CD4-positive, alpha-beta memory T cell (primary cell): ENCODE measurements at regions of chr17 and their contacts with region 1.

Region 1: GRCh38 chr17:3738562-3739295 is 15.0 kb downstream of the HASPIN start:
- DNase-seq: peak; percentile 45 to 71 (median 52)
- H3K4me3 ChIP-seq: no peak overlapping the region
- H3K4me3 Mint-ChIP-seq: peak overlapping the region; percentile 21 to 70 (median 58)
- H3K27ac ChIP-seq: no peak overlapping the region
- H3K27ac Mint-ChIP-seq: peak overlapping the region; percentile 67 to 88 (median 81)
- H3K4me1 ChIP-seq: peaks cover 39% of the 10 kb centered on the region
- H3K4me1 Mint-ChIP-seq: peaks cover 21 to 39% (median 30%) of the 10 kb centered on the region in 4 donors
- H3K27me3 ChIP-seq: no peaks in the 10 kb centered on the region
- H3K27me3 Mint-ChIP-seq: no peaks in the 10 kb centered on the region

Region 2: DNA sequence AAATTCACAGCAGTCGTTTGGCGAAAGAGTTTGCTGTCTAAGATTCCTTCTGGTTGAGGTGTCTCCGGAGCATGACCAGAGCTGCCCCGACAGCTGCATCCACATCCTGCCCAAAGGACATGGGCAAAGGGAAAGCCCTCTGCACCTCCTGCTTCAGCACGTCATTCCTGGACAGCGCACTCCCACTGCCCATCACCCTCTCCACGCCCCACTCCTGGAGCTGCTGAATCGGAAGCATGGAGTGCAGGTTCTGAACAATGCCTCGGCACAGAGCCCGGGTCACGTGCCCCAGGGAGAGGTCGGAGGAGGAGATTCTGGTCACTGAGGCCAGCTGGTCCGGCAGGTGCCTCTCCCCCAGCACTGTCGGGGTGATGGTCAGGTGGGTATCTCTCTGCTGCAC is 128.2 kb before region 1 on chr17:
- CTCF ChIA-PET with region 1: no interaction called
- POLR2A ChIA-PET with region 1: no interaction called
- intact Hi-C with region 1: no loop called
- DNase-seq: no peak
- H3K4me3 ChIP-seq: no peak overlapping the region
- H3K4me3 Mint-ChIP-seq: no peak overlapping the region
- H3K27ac ChIP-seq: no peak overlapping the region
- H3K27ac Mint-ChIP-seq: no peak overlapping the region
- H3K4me1 ChIP-seq: no peaks in the 10 kb centered on the region
- H3K4me1 Mint-ChIP-seq: no peaks in the 10 kb centered on the region
- H3K27me3 ChIP-seq: no peaks in the 10 kb centered on the region
- H3K27me3 Mint-ChIP-seq: no peaks in the 10 kb centered on the region

Region 3: DNA sequence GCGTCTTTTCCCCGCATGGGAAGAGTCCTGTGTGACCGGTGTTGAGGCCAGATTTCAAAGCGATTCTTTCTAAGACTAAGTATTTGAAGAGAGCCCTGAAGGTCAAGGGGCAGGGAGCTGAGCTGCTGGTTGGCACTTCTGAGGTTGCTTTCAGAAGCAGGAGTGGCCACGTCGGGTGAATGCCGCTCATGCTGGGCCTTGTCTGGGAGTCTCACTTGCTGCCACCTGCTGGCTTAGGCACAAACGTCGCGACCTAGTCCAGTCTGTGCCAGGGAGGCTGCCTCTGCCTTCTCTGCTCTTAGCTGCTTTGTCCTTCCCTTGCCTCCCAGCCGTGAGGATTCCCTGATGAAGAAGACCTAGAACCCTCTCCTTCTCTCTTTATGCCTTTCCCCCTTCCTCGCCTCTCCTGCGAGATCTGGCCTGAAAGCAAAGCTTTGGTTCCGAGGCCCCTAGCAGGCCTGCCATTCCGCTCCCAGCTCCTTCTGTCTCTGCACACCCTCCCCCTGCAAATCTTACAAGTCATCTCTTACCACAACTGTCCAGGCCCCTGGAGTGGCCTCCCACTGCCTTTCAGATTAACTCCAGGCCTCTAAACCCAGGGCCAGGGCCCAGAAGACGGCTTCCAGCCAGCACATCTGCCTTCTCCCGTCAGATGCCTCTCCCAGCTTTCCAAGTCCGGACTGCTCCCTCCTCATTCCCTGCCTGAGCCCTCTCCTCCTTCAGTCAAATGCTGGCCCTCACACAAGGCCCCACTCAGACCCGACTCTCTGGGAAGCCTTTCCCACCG is 90.8 kb before region 1 on chr17:
- CTCF ChIA-PET with region 1: no interaction called
- POLR2A ChIA-PET with region 1: no interaction called
- intact Hi-C with region 1: no loop called
- DNase-seq: peak in 3 of 5 donors; percentile 20 to 26 (median 21)
- H3K4me3 ChIP-seq: no peak overlapping the region
- H3K4me3 Mint-ChIP-seq: no peak overlapping the region
- H3K27ac ChIP-seq: no peak overlapping the region
- H3K27ac Mint-ChIP-seq: no peak overlapping the region
- H3K4me1 ChIP-seq: no peaks in the 10 kb centered on the region
- H3K4me1 Mint-ChIP-seq: peaks cover 0 to 3% (median 0%) of the 10 kb centered on the region in 4 donors
- H3K27me3 ChIP-seq: no peaks in the 10 kb centered on the region
- H3K27me3 Mint-ChIP-seq: no peaks in the 10 kb centered on the region

Region 4: GRCh38 chr17:3695723-3696411 is 42.9 kb before region 1 on chr17 and contains the start of gene P2RX5:
- CTCF ChIA-PET with region 1: interaction called, 11 read pairs
- POLR2A ChIA-PET with region 1: interaction called, 6 read pairs
- intact Hi-C with region 1: no loop called
- DNase-seq: peak; percentile 32 to 44 (median 37)
- H3K4me3 ChIP-seq: peak within 1 kb of the TSS; percentile 42 to 74
- H3K4me3 Mint-ChIP-seq: peak within 1 kb of the TSS; percentile 94 to 98 (median 96)
- H3K27ac ChIP-seq: peak within 1 kb of the TSS; percentile 48
- H3K27ac Mint-ChIP-seq: peak within 1 kb of the TSS; percentile 35 to 95 (median 87)
- H3K4me1 ChIP-seq: peaks cover 20% of the 10 kb centered on the region
- H3K4me1 Mint-ChIP-seq: peaks cover 8 to 36% (median 20%) of the 10 kb centered on the region in 4 donors
- H3K27me3 ChIP-seq: no peaks in the 10 kb centered on the region
- H3K27me3 Mint-ChIP-seq: no peaks in the 10 kb centered on the region
- total RNA-seq, gene P2RX5: 13.8 to 16.0 TPM

Region 5: GRCh38 chr17:3762922-3763776 is 24.4 kb after region 1 on chr17:
- CTCF ChIA-PET with region 1: interaction called, 28 read pairs
- POLR2A ChIA-PET with region 1: interaction called, 4 read pairs
- intact Hi-C with region 1: no loop called
- DNase-seq: peak in 2 of 5 donors; percentile 35 to 61
- H3K4me3 ChIP-seq: no peak overlapping the region
- H3K4me3 Mint-ChIP-seq: peak overlapping the region; percentile 57 to 94 (median 78)
- H3K27ac ChIP-seq: peak overlapping the region; percentile 30
- H3K27ac Mint-ChIP-seq: peak overlapping the region; percentile 77 to 97 (median 89)
- H3K4me1 ChIP-seq: peaks cover 50% of the 10 kb centered on the region
- H3K4me1 Mint-ChIP-seq: peaks cover 24 to 61% (median 39%) of the 10 kb centered on the region in 4 donors
- H3K27me3 ChIP-seq: no peaks in the 10 kb centered on the region
- H3K27me3 Mint-ChIP-seq: peaks cover 0 to 1% of the 10 kb centered on the region in 2 donors

Region 6: DNA sequence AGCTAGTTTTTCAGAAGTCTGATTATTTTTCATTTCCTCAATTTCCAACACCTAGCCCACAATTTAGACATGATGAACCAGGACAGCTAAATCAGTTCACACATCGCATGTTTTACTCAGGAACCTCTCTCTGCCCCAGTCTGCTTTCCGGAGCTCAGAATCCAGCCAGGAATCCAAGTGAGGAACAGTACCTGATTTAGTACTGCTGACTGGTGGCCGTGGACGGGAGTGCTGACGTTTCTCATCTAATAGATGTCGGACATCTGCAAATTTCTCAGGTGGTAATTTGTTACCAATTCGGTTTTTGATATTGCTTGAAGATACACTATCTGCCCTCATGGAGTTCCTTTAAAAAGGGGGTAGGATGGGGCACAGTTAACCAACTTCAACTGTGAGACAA is 77.2 kb after region 1 on chr17:
- CTCF ChIA-PET with region 1: interaction called, 333 read pairs
- POLR2A ChIA-PET with region 1: no interaction called
- intact Hi-C with region 1: no loop called
- DNase-seq: no peak
- H3K4me3 ChIP-seq: no peak overlapping the region
- H3K4me3 Mint-ChIP-seq: no peak overlapping the region
- H3K27ac ChIP-seq: no peak overlapping the region
- H3K27ac Mint-ChIP-seq: no peak overlapping the region
- H3K4me1 ChIP-seq: no peaks in the 10 kb centered on the region
- H3K4me1 Mint-ChIP-seq: no peaks in the 10 kb centered on the region
- H3K27me3 ChIP-seq: no peaks in the 10 kb centered on the region
- H3K27me3 Mint-ChIP-seq: no peaks in the 10 kb centered on the region

Region 7: GRCh38 chr17:3845621-3846441 is 107.1 kb after region 1 on chr17 and contains the start of gene NCBP3:
- CTCF ChIA-PET with region 1: interaction called, 127 read pairs
- POLR2A ChIA-PET with region 1: interaction called, 32 read pairs
- intact Hi-C with region 1: loop called (anchors 1 kb)
- DNase-seq: peak; percentile 85 to 93 (median 90)
- H3K4me3 ChIP-seq: peak within 1 kb of the TSS; percentile 38 to 85
- H3K4me3 Mint-ChIP-seq: peak within 1 kb of the TSS; percentile 91 to 96 (median 94)
- H3K27ac ChIP-seq: peak within 1 kb of the TSS; percentile 84
- H3K27ac Mint-ChIP-seq: peak within 1 kb of the TSS; percentile 87 to 94 (median 89)
- H3K4me1 ChIP-seq: peaks cover 30% of the 10 kb centered on the region
- H3K4me1 Mint-ChIP-seq: peaks cover 12 to 35% (median 24%) of the 10 kb centered on the region in 4 donors
- H3K27me3 ChIP-seq: no peaks in the 10 kb centered on the region
- H3K27me3 Mint-ChIP-seq: no peaks in the 10 kb centered on the region
- total RNA-seq, gene NCBP3: 48.5 to 66.7 TPM

Region 8: GRCh38 chr17:4004517-4005295 is 266.0 kb after region 1 on chr17:
- CTCF ChIA-PET with region 1: interaction called, 5 read pairs
- POLR2A ChIA-PET with region 1: no interaction called
- intact Hi-C with region 1: loop called (anchors 10 kb)
- DNase-seq: peak in 4 of 5 donors; percentile 52 to 65 (median 56)
- H3K4me3 ChIP-seq: no peak overlapping the region
- H3K4me3 Mint-ChIP-seq: peak overlapping the region in 1 of 8 donors; percentile 34
- H3K27ac ChIP-seq: no peak overlapping the region
- H3K27ac Mint-ChIP-seq: peak overlapping the region in 5 of 7 donors; percentile 42 to 79 (median 57)
- H3K4me1 ChIP-seq: peaks cover 8% of the 10 kb centered on the region
- H3K4me1 Mint-ChIP-seq: peaks cover 0 to 14% (median 4%) of the 10 kb centered on the region in 4 donors
- H3K27me3 ChIP-seq: no peaks in the 10 kb centered on the region
- H3K27me3 Mint-ChIP-seq: no peaks in the 10 kb centered on the region

Region 9: DNA sequence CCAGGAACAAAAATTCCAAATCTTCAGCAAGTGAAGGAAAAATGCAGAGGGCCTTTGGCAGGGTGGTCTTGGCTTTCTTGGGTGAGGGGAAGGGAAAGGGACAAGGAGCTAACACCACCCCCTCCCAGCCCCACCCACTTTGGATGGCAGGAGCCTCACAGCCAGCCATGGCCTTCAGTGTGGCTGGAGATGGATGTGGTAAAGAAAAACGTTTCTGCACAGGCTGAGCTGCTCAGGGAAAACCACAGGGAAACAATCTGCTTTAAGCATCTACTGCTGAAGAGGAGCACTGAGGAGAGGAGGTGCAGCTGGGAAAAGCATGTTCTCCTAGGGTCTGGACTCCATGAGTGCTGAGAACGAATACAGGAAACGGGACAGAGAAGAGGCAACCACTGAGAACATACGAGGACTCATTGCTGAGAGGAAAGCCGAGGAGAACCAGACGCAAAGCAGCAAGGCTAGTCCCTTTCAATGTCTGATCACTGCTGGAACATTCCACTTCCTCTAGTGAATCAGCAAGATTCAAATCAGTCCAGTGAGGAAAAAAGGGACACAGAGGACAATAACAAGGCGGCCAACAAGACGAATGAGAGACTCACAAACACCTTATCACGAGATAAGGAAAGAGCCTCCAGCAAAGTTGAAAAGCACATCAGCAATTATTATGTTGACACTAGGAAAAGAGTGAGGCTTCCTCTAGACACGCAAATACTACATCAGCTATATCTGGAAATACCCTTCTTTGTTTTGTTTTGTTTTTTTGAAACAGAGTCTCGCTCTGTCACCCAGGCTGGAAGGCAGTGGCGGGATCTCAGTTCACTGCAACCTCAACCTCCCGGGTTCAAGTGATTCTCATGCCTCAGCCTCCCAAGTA is 362.4 kb after region 1 on chr17:
- CTCF ChIA-PET with region 1: no interaction called
- POLR2A ChIA-PET with region 1: no interaction called
- intact Hi-C with region 1: no loop called
- DNase-seq: peak; percentile 30 to 62 (median 43)
- H3K4me3 ChIP-seq: no peak overlapping the region
- H3K4me3 Mint-ChIP-seq: peak overlapping the region in 4 of 8 donors; percentile 7 to 62 (median 56)
- H3K27ac ChIP-seq: peak overlapping the region; percentile 60
- H3K27ac Mint-ChIP-seq: peak overlapping the region; percentile 84 to 97 (median 92)
- H3K4me1 ChIP-seq: peaks cover 17% of the 10 kb centered on the region
- H3K4me1 Mint-ChIP-seq: peaks cover 14 to 33% (median 21%) of the 10 kb centered on the region in 4 donors
- H3K27me3 ChIP-seq: no peaks in the 10 kb centered on the region
- H3K27me3 Mint-ChIP-seq: no peaks in the 10 kb centered on the region